Mammary epithelial cell (primary cell): ENCODE measurements at regions of chr1 and their contacts with region 1.

Region 1: DNA sequence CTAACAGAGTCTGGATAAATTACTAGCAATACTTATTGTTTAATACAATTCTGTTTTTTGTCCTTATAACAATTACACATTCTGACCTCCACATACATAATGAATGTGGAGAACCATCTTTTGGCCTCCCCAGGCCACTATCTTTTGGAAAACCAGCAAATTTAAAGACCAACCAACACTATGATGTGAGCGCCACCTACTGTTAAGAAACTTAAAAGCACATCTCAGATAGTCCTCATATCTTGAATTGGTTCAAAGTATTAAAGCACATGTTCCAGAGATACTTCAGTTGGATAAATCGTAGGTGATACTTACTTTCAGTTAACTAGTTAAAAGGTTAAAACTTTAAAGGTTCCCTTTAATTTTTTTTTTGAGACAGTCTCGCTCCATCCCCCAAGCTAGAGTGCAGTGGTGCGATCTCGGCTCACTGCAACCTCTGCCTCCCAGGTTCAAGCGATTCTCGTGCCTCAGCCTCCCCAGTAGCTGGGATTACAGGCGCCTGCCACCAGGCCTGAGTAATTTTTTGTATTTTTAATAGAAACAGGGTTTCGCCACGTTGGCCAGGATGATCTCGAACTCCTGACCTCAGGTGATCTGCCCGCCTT is 29.3 kb upstream of the USP1 start:
- DNase-seq: peak; percentile 44
- H3K4me3 ChIP-seq: no peak overlapping the region
- H3K27ac ChIP-seq: no peak overlapping the region
- H3K4me1 ChIP-seq: no peaks in the 10 kb centered on the region
- H3K27me3 ChIP-seq: no peaks in the 10 kb centered on the region
- CTCF ChIP-seq: peak; percentile 77 to 78

Region 2: DNA sequence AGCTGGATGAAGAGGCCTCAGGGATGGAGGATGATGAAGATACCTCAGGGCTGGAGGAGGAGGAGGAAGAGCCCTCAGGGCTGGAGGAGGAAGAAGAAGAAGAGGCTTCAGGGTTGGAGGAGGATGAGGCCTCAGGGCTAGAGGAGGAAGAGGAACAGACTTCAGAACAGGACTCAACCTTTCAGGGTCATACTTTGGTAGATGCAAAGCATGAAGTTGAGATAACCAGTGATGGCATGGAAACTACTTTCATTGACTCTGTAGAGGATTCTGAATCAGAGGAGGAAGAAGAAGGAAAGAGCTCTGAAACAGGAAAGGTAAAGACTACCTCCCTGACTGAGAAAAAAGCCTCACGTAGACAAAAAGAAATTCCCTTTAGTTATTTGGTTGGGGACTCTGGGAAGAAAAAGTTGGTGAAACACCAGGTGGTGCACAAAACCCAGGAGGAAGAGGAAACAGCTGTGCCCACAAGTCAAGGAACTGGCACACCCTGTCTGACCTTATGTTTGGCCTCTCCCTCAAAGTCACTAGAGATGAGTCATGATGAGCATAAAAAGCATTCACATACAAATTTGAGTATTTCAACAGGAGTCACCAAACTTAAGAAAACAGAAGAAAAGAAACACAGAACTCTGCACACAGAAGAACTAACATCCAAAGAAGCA is 197.4 kb before region 1 on chr1:
- CTCF ChIA-PET with region 1: no interaction called
- dilution Hi-C with region 1: no loop called
- in situ Hi-C with region 1: no loop called
- intact Hi-C with region 1: loop called (anchors 1 kb)
- DNase-seq: peak; percentile 76
- H3K4me3 ChIP-seq: no peak overlapping the region
- H3K27ac ChIP-seq: no peak overlapping the region
- H3K4me1 ChIP-seq: peaks cover 6% of the 10 kb centered on the region
- H3K27me3 ChIP-seq: no peaks in the 10 kb centered on the region
- CTCF ChIP-seq: peak in 1 of 2 donors; percentile 34

Region 3: GRCh38 chr1:62230709-62231108 is 176.8 kb before region 1 on chr1:
- CTCF ChIA-PET with region 1: no interaction called
- dilution Hi-C with region 1: no loop called
- in situ Hi-C with region 1: no loop called
- intact Hi-C with region 1: loop called (anchors 5 kb)
- DNase-seq: peak; percentile 99
- H3K4me3 ChIP-seq: no peak overlapping the region
- H3K27ac ChIP-seq: peak overlapping the region; percentile 82
- H3K4me1 ChIP-seq: peaks cover 53% of the 10 kb centered on the region
- H3K27me3 ChIP-seq: no peaks in the 10 kb centered on the region
- CTCF ChIP-seq: no peak

Region 4: DNA sequence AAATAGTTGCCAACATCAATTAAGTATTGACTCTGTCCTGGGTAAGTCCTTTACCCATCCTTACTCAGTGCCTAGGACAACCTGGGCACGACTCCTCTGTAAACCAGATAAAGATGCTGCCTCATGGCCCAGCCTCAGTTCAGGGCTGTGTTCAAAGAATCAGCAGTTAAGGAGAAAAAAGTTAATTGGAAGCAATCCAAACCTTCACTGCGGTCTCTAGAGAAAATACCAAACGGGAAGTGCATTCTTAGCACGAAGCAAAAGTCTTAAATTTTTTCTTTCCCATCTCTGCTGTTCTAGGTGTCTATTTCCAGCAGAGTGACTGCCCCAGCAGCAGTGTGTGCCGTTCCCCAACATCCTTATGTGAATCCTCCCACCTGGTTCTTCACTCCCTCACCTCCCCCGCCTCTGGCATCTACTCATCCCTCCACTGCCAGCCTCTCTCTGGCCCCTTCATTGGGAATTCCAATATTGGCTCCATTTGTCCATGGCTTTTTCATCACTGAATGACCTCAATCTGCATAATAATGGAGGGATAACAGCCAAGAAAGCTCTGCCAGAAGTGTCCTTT is 111.5 kb before region 1 on chr1:
- CTCF ChIA-PET with region 1: no interaction called
- dilution Hi-C with region 1: no loop called
- in situ Hi-C with region 1: loop called in 1 of 2 experiments (anchors 10 kb)
- intact Hi-C with region 1: loop called (anchors 1 kb)
- DNase-seq: peak; percentile 62
- H3K4me3 ChIP-seq: peak overlapping the region in 1 of 3 experiments; percentile 12
- H3K27ac ChIP-seq: no peak overlapping the region
- H3K4me1 ChIP-seq: peaks cover 27% of the 10 kb centered on the region
- H3K27me3 ChIP-seq: no peaks in the 10 kb centered on the region
- CTCF ChIP-seq: no peak